ENCODE measurements at regions of chr11 and their contacts with region 1.

Region 1: DNA sequence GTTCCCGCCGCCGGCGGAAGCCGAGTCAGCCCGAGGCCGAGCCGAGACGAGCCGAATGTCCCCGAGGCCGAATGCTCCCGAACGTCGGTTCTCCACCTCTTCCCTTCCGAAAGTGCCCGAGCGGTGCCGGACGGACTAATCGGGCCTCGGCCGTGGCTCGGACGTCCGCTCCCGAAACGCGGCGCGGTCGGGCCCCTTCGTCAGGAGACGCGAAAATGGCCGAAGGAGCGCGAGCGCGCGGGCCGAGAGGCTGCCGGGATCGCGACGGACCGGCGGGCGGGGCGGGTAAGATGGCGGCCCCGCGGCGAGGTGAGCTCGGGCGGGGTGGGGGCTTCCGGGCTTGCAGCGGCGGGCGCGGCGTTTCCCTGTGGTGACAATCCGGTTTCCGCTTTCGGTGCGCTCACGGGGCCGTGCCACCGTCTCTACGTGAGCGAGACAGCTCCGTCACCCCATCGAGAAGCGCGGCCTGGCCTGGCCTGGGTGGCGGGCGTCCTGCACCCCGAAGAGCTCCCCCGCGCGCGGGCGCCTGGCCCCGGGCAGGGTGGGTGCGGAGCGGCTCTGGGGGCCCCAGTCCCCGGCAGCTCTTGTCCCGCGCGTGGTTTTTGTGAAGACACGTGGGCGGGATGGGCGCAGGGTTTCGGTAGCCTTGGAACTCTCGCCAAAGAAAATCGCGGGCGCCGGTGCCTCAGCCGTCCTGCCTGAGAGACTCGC is at the start of gene TMEM80:
- DNase-seq: peak; percentile 88
- ATAC-seq: peak; percentile 86
- H3K4me3 ChIP-seq: peak within 1 kb of the TSS; percentile 75 to 78
- H3K27ac ChIP-seq: peak within 1 kb of the TSS; percentile 96
- H3K4me1 ChIP-seq: peaks cover 55% of the 10 kb centered on the region
- H3K27me3 ChIP-seq: no peaks in the 10 kb centered on the region
- CTCF ChIP-seq: no peak
- total RNA-seq, gene TMEM80: 45.2 TPM

Region 2: DNA sequence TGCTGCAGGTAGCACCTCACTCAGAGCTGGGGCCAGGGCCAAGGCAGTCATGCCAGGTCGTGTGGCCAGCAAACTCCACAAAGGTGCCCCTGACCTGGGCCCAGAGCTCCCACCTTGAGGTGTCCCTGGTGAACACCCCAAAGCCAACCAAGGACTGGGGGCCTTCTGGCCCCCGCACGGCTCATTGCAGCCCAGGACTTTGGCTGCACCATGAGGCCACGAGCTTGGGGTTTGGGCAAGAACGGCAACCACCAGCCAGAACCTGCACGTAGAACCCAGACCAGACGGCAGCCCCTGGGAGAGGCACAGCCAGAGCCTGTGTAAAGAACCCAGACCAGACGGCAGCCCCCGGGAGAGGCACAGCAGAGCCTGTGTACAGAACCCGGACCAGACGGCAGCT is 150.5 kb before region 1 on chr11:
- CTCF ChIA-PET with region 1: no interaction called
- POLR2A ChIA-PET with region 1: no interaction called
- in situ Hi-C with region 1: no loop called
- intact Hi-C with region 1: no loop called
- DNase-seq: no peak
- ATAC-seq: no peak
- H3K4me3 ChIP-seq: no peak overlapping the region
- H3K27ac ChIP-seq: no peak overlapping the region
- H3K4me1 ChIP-seq: peaks cover under 1% of the 10 kb centered on the region; the same call in 1 of the 2 replicates
- H3K27me3 ChIP-seq: no peaks in the 10 kb centered on the region
- CTCF ChIP-seq: no peak

Region 3: GRCh38 chr11:720642-721246 is 25.1 kb after region 1 on chr11:
- CTCF ChIA-PET with region 1: interaction called, 12 read pairs
- POLR2A ChIA-PET with region 1: interaction called, 3 read pairs
- in situ Hi-C with region 1: no loop called
- intact Hi-C with region 1: loop called (anchors 1 kb)
- DNase-seq: no peak
- ATAC-seq: peak; percentile 54
- H3K4me3 ChIP-seq: no peak overlapping the region
- H3K27ac ChIP-seq: no peak overlapping the region
- H3K4me1 ChIP-seq: peaks cover 5% of the 10 kb centered on the region; the same call in 1 of the 2 replicates
- H3K27me3 ChIP-seq: no peaks in the 10 kb centered on the region
- CTCF ChIP-seq: no peak

Region 4: DNA sequence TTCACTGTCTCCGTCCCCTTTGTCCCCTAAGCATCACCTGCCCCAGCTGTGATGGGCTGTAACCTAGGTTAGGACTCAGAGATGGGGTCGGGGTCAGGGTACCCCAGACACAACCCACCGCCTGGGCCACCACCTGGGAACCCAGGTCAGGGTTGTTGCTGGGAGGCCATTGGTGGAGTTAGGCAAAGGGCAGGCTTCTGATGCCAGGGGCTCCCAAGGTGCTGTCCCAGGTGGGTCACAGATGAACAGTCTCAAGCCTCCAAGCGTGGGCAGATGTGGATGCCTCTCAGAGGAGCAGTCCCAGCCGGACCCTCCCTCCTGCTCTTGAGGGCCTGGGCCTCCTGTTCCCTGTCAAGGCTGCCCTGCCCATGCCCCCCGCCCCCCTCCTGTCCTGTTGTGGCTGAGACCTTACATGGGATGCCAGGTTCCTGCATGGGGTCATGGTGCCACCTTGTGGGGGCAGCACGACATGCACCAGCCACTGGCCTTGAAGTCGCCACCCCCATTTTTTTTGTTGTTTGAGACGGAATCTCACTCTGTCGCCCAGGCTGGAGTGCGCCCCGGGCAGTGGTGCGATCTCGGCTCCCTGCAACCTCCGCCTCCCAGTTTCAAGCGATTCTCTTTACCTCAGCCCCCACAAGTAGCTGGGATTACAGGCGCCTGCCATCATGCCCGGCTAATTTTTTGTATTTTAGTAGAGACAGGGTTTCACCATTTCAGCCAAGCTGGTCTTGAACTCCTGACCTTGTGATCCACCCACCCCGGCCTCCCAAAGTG is 69.5 kb after region 1 on chr11:
- CTCF ChIA-PET with region 1: interaction called, 4 read pairs
- POLR2A ChIA-PET with region 1: no interaction called
- in situ Hi-C with region 1: no loop called
- intact Hi-C with region 1: loop called (anchors 2 kb)
- DNase-seq: no peak
- ATAC-seq: peak; percentile 63
- H3K4me3 ChIP-seq: no peak overlapping the region
- H3K27ac ChIP-seq: no peak overlapping the region; the same call in 1 of the 2 replicates
- H3K4me1 ChIP-seq: peaks cover 25% of the 10 kb centered on the region
- H3K27me3 ChIP-seq: no peaks in the 10 kb centered on the region
- CTCF ChIP-seq: peak; percentile 98; the same call in 1 of the 2 replicates